ENCODE measurements at regions of chr2 and their contacts with region 1.

Region 1: GRCh38 chr2:138060301-138060635 is 96.0 kb downstream of the HNMT start:
- DNase-seq: peak in 1 of 2 donors; percentile 67
- H3K4me3 ChIP-seq: no peak overlapping the region
- H3K27ac ChIP-seq: no peak overlapping the region
- H3K4me1 ChIP-seq: no peaks in the 10 kb centered on the region
- H3K27me3 ChIP-seq: no peaks in the 10 kb centered on the region
- CTCF ChIP-seq: no peak

Region 2: GRCh38 chr2:138707392-138708074 is 647.3 kb after region 1 on chr2:
- intact Hi-C with region 1: loop called (anchors 5 kb)
- DNase-seq: no peak
- H3K4me3 ChIP-seq: no peak overlapping the region
- H3K27ac ChIP-seq: no peak overlapping the region
- H3K4me1 ChIP-seq: peaks cover 0 to 7% of the 10 kb centered on the region in 2 donors
- H3K27me3 ChIP-seq: no peaks in the 10 kb centered on the region
- CTCF ChIP-seq: no peak